Psoas muscle (tissue), 8 donors: ENCODE measurements at regions of chr14 and their contacts with region 1.

Region 1: DNA sequence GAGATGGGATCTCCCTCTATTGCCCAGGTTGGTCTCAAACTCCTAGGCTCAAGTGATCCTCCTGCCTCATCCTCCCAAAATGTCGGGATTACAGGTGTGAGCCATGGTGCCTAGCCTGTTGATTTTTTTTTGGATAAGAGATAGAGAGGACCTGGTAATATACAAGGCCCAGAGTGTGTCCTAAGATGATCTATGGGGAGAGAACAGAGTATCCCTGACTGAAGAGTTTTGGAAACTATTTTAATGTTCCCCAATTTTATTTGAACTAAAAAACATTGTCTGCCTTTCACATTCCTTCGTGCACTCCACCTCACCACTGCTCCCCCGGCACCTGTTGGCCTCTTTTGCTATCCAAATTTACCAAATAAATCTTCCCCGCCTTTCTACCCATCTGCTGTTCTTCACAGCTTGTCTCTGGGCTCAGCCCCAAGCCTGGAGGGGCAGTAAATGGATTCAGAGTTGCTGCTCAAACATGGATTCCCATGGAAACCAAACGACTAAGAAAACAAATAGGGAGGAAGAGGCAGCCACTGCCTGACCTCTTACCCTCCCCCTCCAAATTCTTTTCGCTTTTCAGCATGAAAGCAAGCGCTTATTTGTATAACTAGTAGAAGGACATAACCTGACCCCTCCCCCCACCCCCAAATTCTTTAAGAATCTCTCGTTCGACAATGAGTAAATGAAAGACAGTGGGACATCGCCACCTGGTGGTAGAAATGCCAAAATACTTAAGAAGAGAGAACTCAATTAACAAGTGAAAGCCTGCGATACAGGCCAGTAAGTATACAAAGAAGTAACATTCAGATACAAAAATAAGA is 22.6 kb downstream of the OR10G3 start:
- DNase-seq: peak; percentile 28 to 69
- ATAC-seq: peak in 3 of 4 donors; percentile 53 to 86 (median 72)
- H3K4me3 ChIP-seq: peak overlapping the region; percentile 56
- H3K27ac ChIP-seq: no peak overlapping the region
- H3K4me1 ChIP-seq: no peaks in the 10 kb centered on the region
- H3K27me3 ChIP-seq: no peaks in the 10 kb centered on the region
- CTCF ChIP-seq: peak; percentile 78

Region 2: DNA sequence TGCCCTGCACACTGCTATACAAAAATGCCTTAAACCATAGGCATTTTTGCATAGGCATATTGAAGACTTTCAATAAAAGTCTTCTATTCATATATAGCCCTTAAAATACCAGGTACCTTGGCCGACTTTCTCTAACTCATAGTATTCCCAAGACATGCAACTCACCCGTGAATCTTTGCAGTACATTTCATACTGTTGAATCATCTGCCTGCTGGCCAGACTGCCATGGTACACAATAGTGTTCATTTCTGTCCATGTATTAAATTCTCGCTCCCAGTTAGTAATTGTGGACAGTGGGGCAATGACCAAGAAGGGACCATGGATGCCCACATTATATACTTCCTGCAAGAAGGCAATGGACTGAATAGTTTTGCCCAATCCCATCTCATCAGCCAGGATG is 149.1 kb before region 1 on chr14:
- intact Hi-C with region 1: no loop called
- DNase-seq: no peak
- ATAC-seq: peak in 1 of 4 donors; percentile 32
- H3K4me3 ChIP-seq: no peak overlapping the region
- H3K27ac ChIP-seq: no peak overlapping the region
- H3K4me1 ChIP-seq: no peaks in the 10 kb centered on the region
- H3K27me3 ChIP-seq: no peaks in the 10 kb centered on the region
- CTCF ChIP-seq: no peak

Region 3: GRCh38 chr14:21455911-21456667 is 101.2 kb before region 1 on chr14 and contains the start of gene CHD8:
- intact Hi-C with region 1: loop called in 1 of 2 experiments (anchors 1 kb)
- DNase-seq: peak; percentile 100
- ATAC-seq: peak; percentile 99 to 100 (median 100)
- H3K4me3 ChIP-seq: peak within 1 kb of the TSS; percentile 95
- H3K27ac ChIP-seq: peak within 1 kb of the TSS; percentile 97
- H3K4me1 ChIP-seq: peaks cover 17% of the 10 kb centered on the region
- H3K27me3 ChIP-seq: no peaks in the 10 kb centered on the region
- CTCF ChIP-seq: peak; percentile 61
- total RNA-seq, gene CHD8: 27.1 to 40.1 (median 36.1) TPM

Region 4: DNA sequence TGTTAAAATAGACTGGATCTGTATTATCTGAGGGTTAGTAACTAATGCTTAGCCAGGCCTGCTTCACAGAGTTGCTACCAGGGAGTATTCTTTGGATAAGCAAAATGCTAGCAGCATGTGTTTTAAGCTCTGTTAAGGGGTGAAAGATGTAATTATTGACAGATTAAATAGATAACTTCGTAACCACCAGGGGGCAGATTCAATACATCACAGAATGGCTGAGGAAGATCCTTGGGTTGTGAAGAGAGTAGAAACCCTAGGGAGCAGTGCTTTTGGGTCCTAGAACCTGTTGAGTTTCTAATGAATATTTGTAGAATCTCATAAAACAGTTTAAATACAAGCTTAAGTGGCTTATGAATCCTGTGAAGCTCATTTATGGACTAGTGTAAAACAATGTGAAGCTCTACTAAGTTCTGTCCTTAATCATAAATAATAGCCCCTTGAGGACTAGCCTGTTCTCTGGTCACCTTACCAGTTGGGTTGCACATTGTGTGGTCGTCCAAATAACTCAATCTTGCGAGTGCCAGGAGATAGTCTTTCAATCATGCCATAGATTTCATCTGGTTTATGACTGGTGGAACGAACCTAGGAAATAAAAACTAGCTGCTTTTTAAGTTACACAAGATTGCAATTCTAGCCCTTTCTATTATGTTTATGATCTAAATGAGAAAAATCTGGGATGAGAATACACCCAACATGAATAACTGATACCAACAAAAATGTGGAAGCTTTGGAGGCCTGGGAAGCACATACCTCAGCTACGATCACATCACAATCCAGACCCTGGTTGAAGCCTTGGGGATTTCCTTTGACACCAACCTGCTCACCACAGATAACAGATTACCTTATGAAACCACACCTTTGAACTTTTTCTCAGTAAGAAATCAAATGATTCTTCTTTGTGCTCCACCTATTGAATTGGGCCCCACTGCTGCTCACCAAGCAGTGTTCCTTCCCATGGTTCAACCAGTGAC is 58.5 kb before region 1 on chr14:
- intact Hi-C with region 1: loop called in 1 of 2 experiments (anchors 5 kb)
- DNase-seq: no peak
- ATAC-seq: peak in 1 of 4 donors; percentile 45
- H3K4me3 ChIP-seq: no peak overlapping the region
- H3K27ac ChIP-seq: no peak overlapping the region
- H3K4me1 ChIP-seq: no peaks in the 10 kb centered on the region
- H3K27me3 ChIP-seq: no peaks in the 10 kb centered on the region
- CTCF ChIP-seq: peak; percentile 44

Region 5: GRCh38 chr14:21518725-21519124 is 38.6 kb before region 1 on chr14:
- intact Hi-C with region 1: loop called in 1 of 2 experiments (anchors 5 kb)
- DNase-seq: no peak
- ATAC-seq: no peak
- H3K4me3 ChIP-seq: no peak overlapping the region
- H3K27ac ChIP-seq: no peak overlapping the region
- H3K4me1 ChIP-seq: no peaks in the 10 kb centered on the region
- H3K27me3 ChIP-seq: peaks cover 0 to 4% (median 0%) of the 10 kb centered on the region in 3 donors
- CTCF ChIP-seq: no peak

Region 6: DNA sequence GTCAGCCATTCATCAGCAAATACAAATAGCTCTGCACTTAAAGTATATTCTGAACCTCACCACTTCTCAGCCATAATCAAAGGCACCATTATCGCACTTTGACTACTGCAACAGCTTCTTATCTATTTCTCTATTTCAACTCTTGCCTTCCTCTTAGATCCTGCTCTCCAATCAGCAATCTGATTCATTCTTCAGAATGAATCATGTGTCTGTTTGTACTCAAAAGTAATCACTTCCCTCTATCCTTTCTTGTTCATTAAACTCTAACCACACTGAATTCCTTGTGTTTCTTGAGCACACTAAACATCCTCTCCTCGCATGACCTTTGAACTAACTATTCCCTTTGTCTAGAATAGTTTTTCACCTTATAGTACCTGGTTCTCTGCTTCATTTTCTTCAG is 129.2 kb after region 1 on chr14:
- intact Hi-C with region 1: no loop called
- DNase-seq: no peak
- ATAC-seq: no peak
- H3K4me3 ChIP-seq: no peak overlapping the region
- H3K27ac ChIP-seq: no peak overlapping the region
- H3K4me1 ChIP-seq: no peaks in the 10 kb centered on the region
- H3K27me3 ChIP-seq: peaks cover 0 to 4% (median 0%) of the 10 kb centered on the region in 3 donors
- CTCF ChIP-seq: no peak